Activated CD4-positive, alpha-beta memory T cell treated with anti-CD3 and anti-CD28 coated beads, Interleukin-2, amount 10 ng/mL, durations not matched to agents 7 days and 5 days (primary cell): ENCODE measurements at regions of chr1 and their contacts with region 1.

Region 1: GRCh38 chr1:35557292-35558063 is at the starts of genes KIAA0319L and NCDN:
- DNase-seq: peak; percentile 97
- H3K4me3 Mint-ChIP-seq: peak within 1 kb of the TSS; percentile 95
- H3K27ac Mint-ChIP-seq: peak within 1 kb of the TSS; percentile 94
- H3K4me1 Mint-ChIP-seq: peaks cover 47% of the 10 kb centered on the region
- H3K27me3 Mint-ChIP-seq: no peaks in the 10 kb centered on the region
- total RNA-seq, gene KIAA0319L: 48.4 to 53.2 TPM
- total RNA-seq, gene NCDN: 25.6 to 27.8 TPM

Region 2: DNA sequence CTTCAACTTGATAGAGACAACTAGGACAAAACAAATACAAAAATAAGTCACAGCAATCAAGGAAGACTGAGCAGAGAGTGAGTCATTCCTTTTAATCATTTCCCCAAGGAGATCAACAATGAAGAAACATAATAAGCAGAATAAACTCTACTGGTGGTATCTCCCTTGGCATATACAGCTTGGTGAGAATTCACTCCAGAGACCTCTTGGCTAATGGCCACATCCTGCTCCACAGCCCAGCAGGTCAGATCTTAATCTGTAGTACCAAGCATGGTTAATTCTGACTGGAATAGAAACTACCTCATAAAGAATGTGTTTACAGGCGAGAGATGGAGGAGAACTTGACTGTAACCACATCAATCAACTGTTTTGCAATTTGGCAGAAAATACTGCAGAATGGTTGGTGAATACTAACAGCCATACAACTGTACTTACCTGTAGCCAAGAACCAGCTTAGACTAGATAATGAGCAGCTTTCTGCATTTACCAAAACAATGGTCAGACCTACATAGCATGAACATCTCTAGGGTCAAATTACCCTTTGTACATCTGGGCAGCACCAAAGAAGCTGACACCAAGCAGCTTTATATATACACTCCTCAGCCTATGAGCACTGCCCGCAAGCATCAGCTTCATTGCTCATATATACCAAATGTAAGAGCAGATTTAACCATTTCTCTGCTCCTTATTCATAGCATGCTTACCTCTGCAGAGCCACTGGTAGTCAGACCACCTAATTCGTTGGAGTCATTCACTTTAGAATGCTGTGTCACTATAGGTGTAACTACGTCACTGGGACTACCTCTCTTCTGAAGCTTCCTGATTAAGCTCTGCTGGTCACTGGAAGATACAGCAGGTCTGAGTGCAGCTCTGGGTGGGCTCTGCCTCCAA is 51.3 kb before region 1 on chr1:
- CTCF ChIA-PET with region 1: interaction called, 9 read pairs
- POLR2A ChIA-PET with region 1: interaction called, 36 read pairs
- DNase-seq: peak; percentile 80
- H3K4me3 Mint-ChIP-seq: peak overlapping the region; percentile 45
- H3K27ac Mint-ChIP-seq: peak overlapping the region; percentile 93
- H3K4me1 Mint-ChIP-seq: peaks cover 52% of the 10 kb centered on the region
- H3K27me3 Mint-ChIP-seq: peaks cover 4% of the 10 kb centered on the region

Region 3: DNA sequence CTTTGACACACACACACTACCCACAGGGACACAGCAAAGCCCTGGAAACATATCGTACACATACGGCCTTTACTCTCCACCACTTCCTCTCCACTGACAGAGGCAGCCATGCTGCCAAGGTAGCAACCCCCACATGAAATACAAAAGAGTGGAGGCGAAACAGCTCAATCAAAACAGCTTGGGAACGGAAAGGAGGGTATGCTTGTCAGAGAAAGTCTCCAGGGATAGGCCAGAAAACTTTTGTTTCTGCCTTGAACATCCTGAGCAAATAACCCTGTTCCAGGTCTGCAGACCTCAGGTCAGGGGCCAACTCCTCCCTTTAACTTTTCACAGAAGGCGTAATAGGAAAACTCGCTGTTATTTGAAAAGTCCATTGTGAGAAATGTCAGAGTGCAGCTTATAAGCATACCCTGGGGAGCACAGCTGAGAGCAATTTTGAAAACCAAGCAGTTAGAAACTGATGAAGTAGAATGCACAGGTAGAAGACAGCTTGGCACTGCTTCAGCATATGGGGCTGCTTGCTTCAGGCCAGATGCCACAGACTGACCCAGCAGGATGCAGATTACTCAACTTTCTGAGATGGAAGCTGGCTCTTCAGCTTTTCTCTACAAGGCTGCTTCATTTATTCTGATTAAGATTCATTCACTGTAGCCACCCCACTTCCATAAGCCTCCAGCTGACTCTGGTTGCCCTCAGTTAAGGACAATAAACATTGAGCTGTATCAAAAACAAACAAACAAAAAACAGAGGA is 18.2 kb before region 1 on chr1:
- CTCF ChIA-PET with region 1: interaction called, 4 read pairs
- POLR2A ChIA-PET with region 1: interaction called, 61 read pairs
- DNase-seq: peak; percentile 58
- H3K4me3 Mint-ChIP-seq: peak overlapping the region; percentile 58
- H3K27ac Mint-ChIP-seq: peak overlapping the region; percentile 92
- H3K4me1 Mint-ChIP-seq: peaks cover 45% of the 10 kb centered on the region
- H3K27me3 Mint-ChIP-seq: no peaks in the 10 kb centered on the region

Region 4: GRCh38 chr1:35577071-35577998 is 19.9 kb after region 1 on chr1:
- CTCF ChIA-PET with region 1: interaction called, 3 read pairs
- POLR2A ChIA-PET with region 1: interaction called, 11 read pairs
- DNase-seq: peak; percentile 84
- H3K4me3 Mint-ChIP-seq: peak overlapping the region; percentile 80
- H3K27ac Mint-ChIP-seq: peak overlapping the region; percentile 79
- H3K4me1 Mint-ChIP-seq: peaks cover 32% of the 10 kb centered on the region
- H3K27me3 Mint-ChIP-seq: peaks cover 21% of the 10 kb centered on the region

Region 5: GRCh38 chr1:35675773-35676172 is 118.3 kb after region 1 on chr1:
- CTCF ChIA-PET with region 1: no interaction called
- POLR2A ChIA-PET with region 1: no interaction called
- DNase-seq: no peak
- H3K4me3 Mint-ChIP-seq: no peak overlapping the region
- H3K27ac Mint-ChIP-seq: no peak overlapping the region
- H3K4me1 Mint-ChIP-seq: peaks cover 4% of the 10 kb centered on the region
- H3K27me3 Mint-ChIP-seq: peaks cover 15% of the 10 kb centered on the region